ENCODE measurements at regions of chr15 and their contacts with region 1.

Region 1: GRCh38 chr15:99014803-99015676 is 7.4 kb upstream of the PGPEP1L start:
- DNase-seq: peak; percentile 84 to 85
- H3K4me3 ChIP-seq: peak overlapping the region; percentile 2 to 54 (median 53)
- H3K27ac ChIP-seq: peak overlapping the region; percentile 84 to 96 (median 94)
- H3K4me1 ChIP-seq: peaks cover 5 to 14% of the 10 kb centered on the region in 2 donors
- H3K27me3 ChIP-seq: no peaks in the 10 kb centered on the region
- CTCF ChIP-seq: no peak
- POLR2A ChIP-seq: peak; percentile 31 to 97

Region 2: GRCh38 chr15:99059010-99059981 is 44.3 kb after region 1 on chr15:
- intact Hi-C with region 1: loop called (anchors 5 kb)
- DNase-seq: peak; percentile 61 to 67
- H3K4me3 ChIP-seq: peak overlapping the region in 2 of 3 donors; percentile 21 to 46
- H3K27ac ChIP-seq: peak overlapping the region; percentile 36 to 58 (median 41)
- H3K4me1 ChIP-seq: peaks cover 0 to 6% of the 10 kb centered on the region in 2 donors
- H3K27me3 ChIP-seq: no peaks in the 10 kb centered on the region
- CTCF ChIP-seq: peak in 5 of 6 experiments; percentile 10 to 88 (median 84)
- POLR2A ChIP-seq: peak in 1 of 2 donors; percentile 23

Region 3: DNA sequence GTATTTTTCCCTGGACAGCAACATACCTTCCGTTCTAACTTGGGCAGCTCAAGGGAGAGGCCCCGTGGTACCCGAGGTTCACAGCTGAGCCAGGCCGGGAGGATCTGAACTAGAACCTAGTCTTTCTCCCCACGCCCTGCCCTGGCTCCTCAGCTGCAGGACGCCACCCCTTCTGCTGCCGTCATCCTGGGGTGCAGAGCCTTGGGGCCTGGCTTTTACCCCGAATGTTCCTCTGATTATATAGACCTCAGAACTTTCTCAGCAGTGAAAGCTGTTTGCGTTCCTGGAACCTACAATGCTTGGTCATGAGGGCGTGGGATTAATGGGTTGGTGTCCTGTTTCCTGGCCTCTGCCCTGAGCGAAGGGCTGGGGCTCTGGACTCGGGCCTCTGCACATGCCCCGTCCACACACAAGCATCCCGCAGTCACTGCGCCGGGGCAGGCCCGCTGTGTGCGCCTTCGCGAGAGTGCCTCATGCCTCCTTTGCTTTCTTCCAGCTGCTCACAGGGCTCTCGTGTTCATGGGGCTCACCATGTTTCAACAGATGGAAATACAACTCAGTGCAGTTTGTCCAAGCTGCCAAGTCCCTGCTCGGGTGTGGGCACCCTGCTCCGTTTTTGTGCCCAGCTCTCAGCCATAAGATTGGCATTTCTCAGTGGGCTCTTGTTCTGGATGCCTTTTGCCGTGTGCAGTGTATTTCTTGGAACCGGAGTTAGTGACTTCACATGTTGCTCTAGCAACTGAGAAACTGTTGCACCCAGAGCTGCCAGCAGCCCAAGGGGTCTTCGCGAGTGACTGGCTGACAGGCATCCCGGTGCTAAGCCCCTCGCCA is 110.2 kb after region 1 on chr15:
- intact Hi-C with region 1: no loop called
- DNase-seq: peak in 1 of 2 donors; percentile 36
- H3K4me3 ChIP-seq: no peak overlapping the region
- H3K27ac ChIP-seq: peak overlapping the region; percentile 10 to 91 (median 78)
- H3K4me1 ChIP-seq: peaks cover 17 to 35% of the 10 kb centered on the region in 2 donors
- H3K27me3 ChIP-seq: no peaks in the 10 kb centered on the region
- CTCF ChIP-seq: no peak
- POLR2A ChIP-seq: no peak

Measured in thyroid gland (tissue), 4 donors.